B cell (primary cell): ENCODE measurements at regions of chr17 and their contacts with region 1.

Region 1: GRCh38 chr17:68497885-68498319 is 14.3 kb upstream of the PRKAR1A start:
- DNase-seq: peak; percentile 87
- ATAC-seq: peak; percentile 91
- H3K4me3 ChIP-seq: peak overlapping the region in 4 of 5 experiments; percentile 18 to 52 (median 36)
- H3K4me3 Mint-ChIP-seq: peak overlapping the region; percentile 57
- H3K27ac ChIP-seq: peak overlapping the region; percentile 71 to 81
- H3K27ac Mint-ChIP-seq: peak overlapping the region; percentile 94
- H3K4me1 ChIP-seq: peaks cover 22 to 25% of the 10 kb centered on the region in 2 donors
- H3K4me1 Mint-ChIP-seq: peaks cover 26% of the 10 kb centered on the region
- H3K27me3 ChIP-seq: no peaks in the 10 kb centered on the region
- H3K27me3 Mint-ChIP-seq: no peaks in the 10 kb centered on the region
- CTCF ChIP-seq: no peak

Region 2: GRCh38 chr17:68468334-68468733 is 29.6 kb before region 1 on chr17:
- CTCF ChIA-PET with region 1: interaction called, 14 read pairs
- POLR2A ChIA-PET with region 1: interaction called, 8 read pairs
- intact Hi-C with region 1: no loop called
- DNase-seq: no peak
- ATAC-seq: no peak
- H3K4me3 ChIP-seq: no peak overlapping the region
- H3K4me3 Mint-ChIP-seq: no peak overlapping the region
- H3K27ac ChIP-seq: no peak overlapping the region
- H3K27ac Mint-ChIP-seq: no peak overlapping the region
- H3K4me1 ChIP-seq: peaks cover 0 to 2% of the 10 kb centered on the region in 2 donors
- H3K4me1 Mint-ChIP-seq: peaks cover 2% of the 10 kb centered on the region
- H3K27me3 ChIP-seq: no peaks in the 10 kb centered on the region
- H3K27me3 Mint-ChIP-seq: peaks cover 9% of the 10 kb centered on the region
- CTCF ChIP-seq: no peak

Region 3: DNA sequence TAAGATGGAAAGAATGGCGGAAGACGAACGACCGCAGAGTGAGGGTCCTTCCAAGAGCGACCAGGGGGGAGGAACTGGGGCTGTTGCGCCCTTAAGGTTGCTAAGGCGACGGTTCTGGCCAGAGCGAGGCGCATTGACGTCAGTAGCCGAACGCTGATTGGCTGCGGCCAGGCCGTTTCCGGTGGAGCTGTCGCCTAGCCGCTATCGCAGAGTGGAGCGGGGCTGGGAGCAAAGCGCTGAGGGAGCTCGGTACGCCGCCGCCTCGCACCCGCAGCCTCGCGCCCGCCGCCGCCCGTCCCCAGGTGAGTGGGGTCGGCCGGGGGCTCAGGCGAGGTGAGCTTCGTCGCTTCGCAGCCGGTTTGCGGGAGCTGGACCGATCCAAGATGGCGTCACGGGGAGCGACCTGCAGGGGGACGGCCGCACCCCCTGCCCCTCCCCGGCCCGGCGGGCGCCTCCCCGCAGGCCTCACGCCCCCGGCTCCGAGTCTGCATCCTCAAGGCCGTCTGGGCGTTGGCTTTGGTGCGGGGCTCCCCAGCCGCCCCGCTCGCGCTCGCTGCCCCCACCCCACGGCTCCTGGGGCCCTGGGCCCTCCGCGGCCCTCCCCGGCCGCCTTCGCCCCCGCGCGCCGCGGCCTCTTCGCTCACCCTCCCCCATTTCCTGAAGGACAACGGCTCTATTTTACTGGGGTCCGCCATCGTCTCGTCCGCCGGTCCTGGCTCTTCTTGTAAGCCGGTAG is 14.5 kb after region 1 on chr17 and contains the start of gene PRKAR1A:
- CTCF ChIA-PET with region 1: interaction called, 26 read pairs
- POLR2A ChIA-PET with region 1: interaction called, 17 read pairs
- intact Hi-C with region 1: loop called (anchors 1 kb)
- DNase-seq: peak; percentile 98
- ATAC-seq: peak; percentile 75
- H3K4me3 ChIP-seq: peak within 1 kb of the TSS; percentile 62 to 99 (median 85)
- H3K4me3 Mint-ChIP-seq: peak within 1 kb of the TSS; percentile 100
- H3K27ac ChIP-seq: peak within 1 kb of the TSS; percentile 99
- H3K27ac Mint-ChIP-seq: peak within 1 kb of the TSS; percentile 100
- H3K4me1 ChIP-seq: peaks cover 25 to 28% of the 10 kb centered on the region in 2 donors
- H3K4me1 Mint-ChIP-seq: peaks cover 42% of the 10 kb centered on the region
- H3K27me3 ChIP-seq: no peaks in the 10 kb centered on the region
- H3K27me3 Mint-ChIP-seq: no peaks in the 10 kb centered on the region
- CTCF ChIP-seq: no peak
- total RNA-seq, gene PRKAR1A: 296 and 297 TPM in 2 replicates

Region 4: DNA sequence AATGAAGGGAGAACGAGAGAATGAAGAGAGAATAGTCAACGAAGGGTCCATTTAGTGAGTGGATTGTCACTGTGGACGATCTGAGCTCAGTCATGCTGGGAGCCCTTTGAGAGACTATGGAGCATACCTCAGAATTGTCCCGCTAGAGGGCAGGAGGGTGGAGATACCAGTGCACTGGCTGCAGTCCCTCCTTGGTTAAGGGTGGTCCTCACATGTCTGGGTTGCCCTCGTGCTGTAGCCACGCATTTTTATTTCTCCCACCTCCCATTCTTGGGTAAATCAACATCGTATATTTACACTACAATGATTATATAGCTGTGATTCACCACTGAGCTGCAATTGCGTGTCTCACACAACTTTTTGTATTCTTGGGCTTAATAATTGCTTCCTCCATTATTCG is 136.5 kb after region 1 on chr17:
- CTCF ChIA-PET with region 1: no interaction called
- POLR2A ChIA-PET with region 1: no interaction called
- intact Hi-C with region 1: no loop called
- DNase-seq: no peak
- ATAC-seq: no peak
- H3K4me3 ChIP-seq: no peak overlapping the region
- H3K4me3 Mint-ChIP-seq: no peak overlapping the region
- H3K27ac ChIP-seq: no peak overlapping the region
- H3K27ac Mint-ChIP-seq: no peak overlapping the region
- H3K4me1 ChIP-seq: no peaks in the 10 kb centered on the region
- H3K4me1 Mint-ChIP-seq: no peaks in the 10 kb centered on the region
- H3K27me3 ChIP-seq: no peaks in the 10 kb centered on the region
- H3K27me3 Mint-ChIP-seq: peaks cover 9% of the 10 kb centered on the region
- CTCF ChIP-seq: no peak